Lower leg skin (tissue), 4 donors: ENCODE measurements at regions of chr15 and their contacts with region 1.

Region 1: GRCh38 chr15:65275728-65276126 is 11.0 kb downstream of the PARP16 start:
- DNase-seq: no peak
- H3K4me3 ChIP-seq: no peak overlapping the region
- CTCF ChIP-seq: no peak
- POLR2A ChIP-seq: no peak

Region 2: GRCh38 chr15:65049418-65049840 is 226.3 kb before region 1 on chr15:
- intact Hi-C with region 1: no loop called
- DNase-seq: peak; percentile 83 to 95
- H3K4me3 ChIP-seq: no peak overlapping the region
- CTCF ChIP-seq: no peak
- POLR2A ChIP-seq: no peak

Region 3: GRCh38 chr15:65192016-65192415 is 83.7 kb before region 1 on chr15:
- intact Hi-C with region 1: loop called (anchors 5 kb)
- DNase-seq: peak in 1 of 2 donors; percentile 57
- H3K4me3 ChIP-seq: no peak overlapping the region
- CTCF ChIP-seq: no peak
- POLR2A ChIP-seq: no peak

Region 4: GRCh38 chr15:65223996-65224395 is 51.7 kb before region 1 on chr15:
- intact Hi-C with region 1: no loop called
- DNase-seq: no peak
- H3K4me3 ChIP-seq: no peak overlapping the region
- CTCF ChIP-seq: no peak
- POLR2A ChIP-seq: no peak

Region 5: DNA sequence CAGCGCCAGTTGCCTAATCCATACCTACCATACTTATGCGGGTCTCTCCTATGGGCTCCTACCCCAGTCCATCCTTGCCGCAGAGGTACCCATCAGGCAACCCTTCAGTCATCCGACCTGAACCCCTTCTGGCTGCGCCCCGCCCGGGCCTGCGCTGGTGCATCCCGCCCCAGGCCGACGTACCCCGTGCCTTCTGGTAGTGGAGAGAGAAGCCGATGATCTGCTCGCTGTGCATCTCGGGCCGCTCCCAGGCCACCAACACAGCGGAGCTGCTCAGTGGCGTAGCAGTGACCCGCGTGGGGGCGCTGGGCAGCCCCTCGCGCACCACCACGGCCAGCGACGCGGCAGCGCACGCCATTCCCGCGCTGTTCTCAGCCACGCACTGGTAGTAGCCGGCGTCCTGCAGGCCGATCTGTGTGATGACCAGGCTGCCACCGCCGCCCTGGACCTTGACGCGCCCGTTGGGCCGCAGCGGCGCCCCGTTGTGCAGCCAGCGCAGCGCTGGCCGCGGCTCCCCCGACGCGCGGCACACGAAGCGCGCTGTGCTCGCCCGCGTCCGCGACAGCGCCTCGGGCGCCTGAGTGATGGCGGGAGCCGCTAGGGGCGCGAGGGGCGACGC is 119.9 kb after region 1 on chr15:
- intact Hi-C with region 1: no loop called
- DNase-seq: no peak
- H3K4me3 ChIP-seq: no peak overlapping the region
- CTCF ChIP-seq: no peak
- POLR2A ChIP-seq: no peak